WTC11 (cell line): ENCODE measurements at regions of chr7 and their contacts with region 1.

Region 1: GRCh38 chr7:81469869-81470723 is 299.8 kb downstream of the HGF start:
- DNase-seq: peak; percentile 70
- ATAC-seq: peak; percentile 96
- H3K4me3 Mint-ChIP-seq: no peak overlapping the region
- H3K27ac Mint-ChIP-seq: no peak overlapping the region
- H3K4me1 Mint-ChIP-seq: no peaks in the 10 kb centered on the region
- H3K27me3 Mint-ChIP-seq: no peaks in the 10 kb centered on the region
- CTCF ChIP-seq: peak; percentile 57

Region 2: GRCh38 chr7:80918909-80919662 is 551.0 kb before region 1 on chr7 and contains the start of gene SEMA3C:
- CTCF ChIA-PET with region 1: interaction called, 14 read pairs
- POLR2A ChIA-PET with region 1: no interaction called
- DNase-seq: peak; percentile 89
- ATAC-seq: peak; percentile 98
- H3K4me3 Mint-ChIP-seq: peak within 1 kb of the TSS; percentile 85
- H3K27ac Mint-ChIP-seq: peak within 1 kb of the TSS; percentile 93
- H3K4me1 Mint-ChIP-seq: peaks cover 46% of the 10 kb centered on the region
- H3K27me3 Mint-ChIP-seq: peaks cover 11% of the 10 kb centered on the region
- CTCF ChIP-seq: no peak
- total RNA-seq, gene SEMA3C: 1.6 to 3.1 TPM (median 2.1 TPM) in 3 replicates

Region 3: DNA sequence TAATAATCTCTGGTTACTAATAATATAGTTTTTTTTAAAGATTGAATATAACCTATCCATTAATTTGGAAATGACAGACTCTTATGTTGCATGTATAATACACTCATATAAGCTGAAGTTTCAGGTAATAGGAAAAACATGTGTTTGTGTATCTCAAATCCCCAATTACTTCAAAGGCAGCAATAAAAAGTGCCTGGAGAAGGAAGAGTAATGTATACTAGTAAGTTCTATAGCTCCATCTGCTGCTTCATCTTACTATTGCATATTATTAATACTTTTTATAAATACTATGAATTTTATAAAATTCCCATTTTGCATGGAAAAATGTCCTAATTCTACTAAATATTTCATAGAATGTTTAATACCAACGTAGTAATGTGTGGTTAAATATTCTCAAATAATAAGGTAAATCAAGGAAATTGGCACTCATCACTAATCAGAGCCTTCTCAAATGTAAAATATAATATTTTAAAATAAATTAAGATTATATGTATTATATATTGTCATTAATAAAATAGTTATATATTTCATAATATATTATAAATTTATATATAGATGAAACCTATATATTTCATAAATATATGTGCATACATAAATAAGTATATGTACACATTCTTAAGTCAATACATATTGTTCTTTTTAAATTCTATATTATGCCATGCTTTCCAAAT is 12.1 kb before region 1 on chr7:
- CTCF ChIA-PET with region 1: interaction called, 13 read pairs
- POLR2A ChIA-PET with region 1: no interaction called
- DNase-seq: no peak
- ATAC-seq: no peak
- H3K4me3 Mint-ChIP-seq: no peak overlapping the region
- H3K27ac Mint-ChIP-seq: no peak overlapping the region
- H3K4me1 Mint-ChIP-seq: no peaks in the 10 kb centered on the region
- H3K27me3 Mint-ChIP-seq: no peaks in the 10 kb centered on the region; the same call in 1 of the 2 replicates
- CTCF ChIP-seq: no peak

Region 4: DNA sequence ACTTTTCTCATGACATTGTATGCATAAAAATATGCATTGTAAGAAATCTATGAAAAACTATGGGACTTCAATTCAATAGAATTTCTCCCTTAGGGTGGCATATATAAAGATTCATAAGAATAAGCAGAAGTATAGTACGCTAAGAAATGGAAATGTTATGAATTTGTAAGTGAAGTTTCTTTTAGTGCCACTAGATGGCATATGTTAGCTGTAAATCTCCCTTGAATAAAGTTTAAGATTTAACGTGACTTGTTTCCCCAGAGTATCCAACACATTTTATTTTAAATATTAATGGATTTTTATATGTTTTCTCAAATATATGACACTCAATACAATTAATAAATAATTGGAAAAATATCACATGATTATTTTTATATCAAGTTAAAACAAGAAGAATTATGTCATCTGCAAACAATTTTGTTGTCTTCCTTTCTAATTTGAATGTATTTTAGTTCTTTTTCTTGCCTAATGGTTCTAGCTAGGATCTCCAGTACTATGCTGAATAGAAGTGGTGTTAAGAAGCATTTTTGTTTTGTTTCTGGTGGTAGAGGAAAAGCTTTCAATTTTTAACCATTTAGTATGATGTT is 12.6 kb after region 1 on chr7:
- CTCF ChIA-PET with region 1: interaction called, 27 read pairs
- POLR2A ChIA-PET with region 1: no interaction called
- DNase-seq: no peak
- ATAC-seq: no peak
- H3K4me3 Mint-ChIP-seq: no peak overlapping the region
- H3K27ac Mint-ChIP-seq: no peak overlapping the region
- H3K4me1 Mint-ChIP-seq: peaks cover 7% of the 10 kb centered on the region; the same call in 1 of the 2 replicates
- H3K27me3 Mint-ChIP-seq: no peaks in the 10 kb centered on the region
- CTCF ChIP-seq: peak; percentile 54

Region 5: DNA sequence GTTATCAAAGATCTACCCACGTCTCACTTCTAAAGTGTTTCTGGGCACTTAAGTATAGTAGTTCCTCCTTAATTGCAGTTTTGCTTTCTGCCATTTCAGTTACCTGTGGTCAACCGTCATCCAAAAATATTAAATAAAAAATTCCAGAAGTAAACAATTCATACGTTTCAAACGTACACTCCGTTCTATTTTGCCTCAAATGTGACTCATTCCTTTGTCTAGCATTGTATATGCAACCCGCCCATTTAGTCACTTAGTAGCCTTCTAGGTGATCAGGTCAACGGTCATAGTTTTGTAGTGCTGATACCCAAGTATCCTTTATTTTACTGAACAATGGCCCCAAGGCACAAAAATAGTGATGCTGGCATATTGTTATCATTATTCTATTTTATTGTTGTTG is 266.0 kb after region 1 on chr7:
- CTCF ChIA-PET with region 1: no interaction called
- POLR2A ChIA-PET with region 1: no interaction called
- DNase-seq: no peak
- ATAC-seq: no peak
- H3K4me3 Mint-ChIP-seq: no peak overlapping the region
- H3K27ac Mint-ChIP-seq: no peak overlapping the region
- H3K4me1 Mint-ChIP-seq: no peaks in the 10 kb centered on the region
- H3K27me3 Mint-ChIP-seq: no peaks in the 10 kb centered on the region
- CTCF ChIP-seq: no peak